ENCODE measurements at regions of chr7 and their contacts with region 1.

Region 1: GRCh38 chr7:87806150-87806549 is 70.0 kb downstream of the SLC25A40 start:
- DNase-seq: no peak
- H3K4me3 ChIP-seq: no peak overlapping the region
- H3K27ac ChIP-seq: no peak overlapping the region
- H3K4me1 ChIP-seq: no peaks in the 10 kb centered on the region
- H3K27me3 ChIP-seq: no peaks in the 10 kb centered on the region
- CTCF ChIP-seq: no peak

Region 2: DNA sequence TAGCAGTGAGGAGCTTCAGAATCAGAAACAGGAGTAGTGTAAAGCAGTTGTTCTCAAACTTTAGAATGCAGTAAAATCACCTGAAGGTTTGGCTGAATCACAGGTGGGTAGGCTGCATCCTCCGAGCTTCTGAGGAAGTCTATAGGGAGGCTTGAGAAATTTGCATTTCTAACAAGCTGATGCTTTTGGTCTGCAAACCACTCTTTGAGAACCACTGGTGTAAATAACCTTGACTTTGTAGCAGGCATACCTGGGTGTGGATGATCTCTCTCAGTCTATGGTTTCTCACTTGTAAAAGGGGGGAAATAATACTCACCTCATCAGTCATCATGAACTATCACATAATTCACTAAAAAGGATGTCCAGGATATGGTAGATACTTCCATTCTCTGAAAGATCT is 295.6 kb after region 1 on chr7:
- CTCF ChIA-PET with region 1: no interaction called
- dilution Hi-C with region 1: no loop called
- in situ Hi-C with region 1: loop called in 1 of 2 experiments (anchors 10 kb)
- intact Hi-C with region 1: no loop called
- DNase-seq: no peak
- H3K4me3 ChIP-seq: no peak overlapping the region
- H3K27ac ChIP-seq: no peak overlapping the region
- H3K4me1 ChIP-seq: no peaks in the 10 kb centered on the region
- H3K27me3 ChIP-seq: no peaks in the 10 kb centered on the region
- CTCF ChIP-seq: no peak

Measured in mammary epithelial cell (primary cell).